ENCODE measurements at regions of chr19 and their contacts with region 1.

Region 1: GRCh38 chr19:34974646-34975045 is 10.6 kb upstream of the ZNF792 start:
- DNase-seq: no peak
- H3K4me3 ChIP-seq: no peak overlapping the region
- H3K27ac ChIP-seq: no peak overlapping the region
- H3K4me1 ChIP-seq: no peaks in the 10 kb centered on the region
- H3K27me3 ChIP-seq: no peaks in the 10 kb centered on the region
- CTCF ChIP-seq: no peak

Region 2: DNA sequence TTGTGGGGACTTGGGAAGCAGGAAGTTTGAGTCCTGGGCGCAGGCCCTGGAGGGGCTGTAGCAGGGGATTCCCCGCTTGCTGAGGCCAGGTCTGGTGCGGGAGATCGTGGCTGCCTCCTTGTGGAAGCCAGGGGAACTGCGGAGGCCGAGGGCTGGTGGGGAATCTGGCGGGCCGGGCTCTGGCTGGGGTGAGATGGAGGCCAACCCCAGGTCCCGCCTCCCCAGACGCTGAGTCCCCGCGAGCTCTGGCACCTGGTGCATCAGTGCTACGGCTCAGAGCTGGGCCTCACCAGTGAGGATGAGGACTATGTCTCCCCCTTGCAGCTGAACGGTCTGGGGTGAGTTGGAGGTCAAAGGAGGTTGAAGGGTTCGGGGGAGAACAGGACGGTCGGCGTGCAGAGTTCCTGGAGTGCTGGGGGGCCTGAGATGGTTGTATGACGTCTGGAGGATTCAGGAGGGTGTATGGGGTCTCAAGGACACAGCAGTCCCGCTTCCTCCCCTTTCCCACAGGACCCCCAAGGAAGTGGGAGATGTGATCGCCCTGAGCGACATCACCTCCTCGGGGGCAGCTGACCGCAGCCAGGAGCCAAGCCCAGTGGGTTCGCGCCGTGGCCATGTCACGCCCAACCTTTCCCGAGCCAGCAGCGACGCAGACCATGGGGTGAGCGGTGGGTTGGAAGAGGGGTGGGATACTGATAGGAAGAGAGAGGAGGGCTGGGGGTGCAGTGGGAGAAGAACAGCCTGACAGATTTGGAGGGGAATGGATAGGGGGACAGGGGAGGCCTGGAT is 38.6 kb after region 1 on chr19:
- intact Hi-C with region 1: loop called (anchors 1 kb)
- DNase-seq: peak in 1 of 2 donors; percentile 86
- H3K4me3 ChIP-seq: no peak overlapping the region
- H3K27ac ChIP-seq: no peak overlapping the region
- H3K4me1 ChIP-seq: peaks cover 0 to 4% of the 10 kb centered on the region in 2 donors
- H3K27me3 ChIP-seq: no peaks in the 10 kb centered on the region
- CTCF ChIP-seq: peak; percentile 89 to 99 (median 98)

Region 3: DNA sequence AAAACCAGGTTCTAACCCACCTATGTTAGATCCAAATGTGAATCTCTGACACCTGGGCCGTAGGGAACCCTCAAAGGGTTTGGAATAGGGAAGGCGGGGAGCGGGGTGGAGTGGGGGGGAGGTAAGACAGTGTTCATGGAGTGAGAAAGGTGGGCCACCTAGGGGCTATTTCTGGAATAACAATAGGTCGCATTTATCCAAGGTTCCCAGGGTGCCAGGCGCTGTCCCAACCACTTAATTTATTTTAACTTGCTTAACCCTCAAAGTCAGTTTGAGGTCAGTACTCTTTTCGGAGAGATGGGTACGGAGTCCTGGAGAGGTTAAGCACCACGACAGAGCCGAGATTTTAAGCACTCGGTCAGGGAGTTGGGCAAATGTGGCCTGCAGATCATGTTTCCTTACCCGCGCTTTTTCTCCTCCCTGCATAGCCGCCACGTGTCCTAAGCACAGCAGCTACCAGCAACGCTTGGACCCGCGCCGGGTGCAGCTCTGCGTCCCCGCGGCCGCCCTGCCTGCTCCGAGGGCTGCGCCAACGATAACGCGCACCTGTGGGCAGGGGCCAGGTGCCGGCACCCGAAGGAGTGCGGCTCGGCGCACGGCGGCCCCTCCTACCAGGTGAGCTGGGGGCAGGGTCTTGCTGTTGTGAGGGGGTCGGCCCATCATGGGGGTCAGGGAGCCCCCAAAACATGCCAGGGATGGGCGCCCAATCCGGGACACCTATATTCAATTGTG is 116.0 kb after region 1 on chr19:
- intact Hi-C with region 1: loop called (anchors 1 kb)
- DNase-seq: no peak
- H3K4me3 ChIP-seq: no peak overlapping the region
- H3K27ac ChIP-seq: no peak overlapping the region
- H3K4me1 ChIP-seq: peaks cover 0 to 4% of the 10 kb centered on the region in 2 donors
- H3K27me3 ChIP-seq: peaks cover 3% of the 10 kb centered on the region
- CTCF ChIP-seq: peak in 2 of 3 experiments; percentile 50 to 62

Measured in ascending aorta (tissue), 2 donors.